Dendritic cell treated with granulocyte-macrophage colony-stimulating factor and Interleukin-4, amounts not matched to agents 40 ng/mL and 50 ng/mL, for 4 days (primary cell): ENCODE measurements at regions of chr3 and their contacts with region 1.

Region 1: GRCh38 chr3:131026321-131027178 is at the starts of genes ASTE1 and NEK11:
- H3K4me3 Mint-ChIP-seq: peak within 1 kb of the TSS; percentile 86
- H3K27ac Mint-ChIP-seq: peak within 1 kb of the TSS; percentile 96
- H3K4me1 Mint-ChIP-seq: peaks cover 41% of the 10 kb centered on the region
- H3K27me3 Mint-ChIP-seq: no peaks in the 10 kb centered on the region

Region 2: GRCh38 chr3:130746246-130747039 is 280.1 kb before region 1 on chr3 and contains the start of gene PIK3R4:
- intact Hi-C with region 1: loop called (anchors 1 kb)
- H3K4me3 Mint-ChIP-seq: peak within 1 kb of the TSS; percentile 84
- H3K27ac Mint-ChIP-seq: peak within 1 kb of the TSS; percentile 97
- H3K4me1 Mint-ChIP-seq: peaks cover 41% of the 10 kb centered on the region
- H3K27me3 Mint-ChIP-seq: no peaks in the 10 kb centered on the region

Region 3: DNA sequence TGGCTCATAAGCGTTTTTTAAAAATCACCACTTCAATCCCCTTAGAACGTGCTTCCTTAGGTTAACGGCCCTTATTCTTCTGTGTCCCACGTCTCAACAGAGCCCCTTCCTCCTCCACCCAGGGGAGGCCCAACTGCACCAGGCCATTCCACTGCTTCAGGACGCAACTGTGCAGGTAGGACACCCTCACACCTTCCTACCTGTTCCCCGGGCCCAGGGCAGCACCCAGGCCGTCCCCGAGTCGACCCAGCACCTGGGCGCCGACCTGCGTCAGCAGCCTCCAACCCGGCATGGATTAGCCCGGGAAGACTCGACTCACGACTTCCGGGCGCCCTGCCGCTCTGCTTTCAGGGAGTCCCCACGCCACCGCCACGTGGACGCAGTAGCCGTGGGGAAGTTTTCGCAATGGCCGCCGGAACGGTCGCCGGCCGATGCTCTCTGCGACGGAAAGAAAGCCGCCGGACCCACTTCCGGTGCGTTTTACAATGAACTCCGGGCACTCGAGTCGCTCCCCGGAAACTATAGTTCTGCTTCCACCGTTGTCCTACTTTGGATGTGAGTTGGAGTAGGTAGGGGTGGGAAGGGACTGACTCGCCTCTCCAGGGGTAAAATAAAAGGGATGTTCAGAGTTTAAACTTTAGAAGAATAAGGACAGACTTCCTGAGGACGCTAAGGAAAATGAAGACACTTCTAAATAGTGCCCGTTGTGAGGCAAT is 476.1 kb after region 1 on chr3 and contains the start of gene MRPL3:
- intact Hi-C with region 1: loop called (anchors 5 kb)
- H3K4me3 Mint-ChIP-seq: peak within 1 kb of the TSS; percentile 100
- H3K27ac Mint-ChIP-seq: peak within 1 kb of the TSS; percentile 99
- H3K4me1 Mint-ChIP-seq: peaks cover 39% of the 10 kb centered on the region
- H3K27me3 Mint-ChIP-seq: no peaks in the 10 kb centered on the region